Breast epithelium (tissue), 4 donors: ENCODE measurements at regions of chr13 and their contacts with region 1.

Region 1: DNA sequence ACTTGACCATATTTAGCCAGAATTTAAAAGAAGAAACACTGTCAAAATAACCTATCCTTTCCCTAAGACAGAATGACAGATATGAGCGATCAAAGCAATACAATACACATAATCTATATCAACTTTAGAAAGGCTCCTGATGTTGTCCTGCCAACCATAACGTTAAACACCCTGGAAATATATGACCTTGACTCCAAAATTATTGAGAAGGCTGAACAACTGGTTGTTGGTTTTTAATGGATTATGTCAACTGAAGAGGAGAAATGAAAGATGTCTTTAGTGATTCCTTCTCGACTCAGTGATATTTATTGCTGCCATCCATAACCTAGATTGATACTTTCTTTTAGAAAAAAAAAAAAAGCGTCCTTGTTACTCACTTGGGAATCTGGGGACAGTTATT is 957.2 kb downstream of the SLITRK1 start:
- DNase-seq: no peak
- H3K4me3 ChIP-seq: no peak overlapping the region
- H3K27ac ChIP-seq: no peak overlapping the region
- H3K4me1 ChIP-seq: no peaks in the 10 kb centered on the region
- H3K27me3 ChIP-seq: no peaks in the 10 kb centered on the region
- CTCF ChIP-seq: no peak
- POLR2A ChIP-seq: no peak

Region 2: DNA sequence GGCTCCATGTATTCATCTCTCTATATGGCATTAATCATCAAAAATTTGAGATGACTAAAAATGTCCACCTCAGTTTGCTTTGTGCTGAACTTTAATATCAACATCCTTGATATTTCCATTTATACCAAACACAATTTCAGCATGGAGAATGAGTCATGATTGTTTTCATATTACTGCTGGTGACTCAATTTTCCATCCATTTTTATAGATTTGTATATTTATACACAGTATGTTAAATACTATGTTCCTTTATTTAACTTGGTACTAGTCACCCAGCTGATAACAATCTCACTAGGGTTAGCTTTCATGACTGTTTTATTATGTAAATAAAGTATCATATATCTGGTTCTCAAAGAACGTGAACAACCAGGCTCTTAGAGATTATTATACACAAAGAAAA is 297.9 kb before region 1 on chr13:
- intact Hi-C with region 1: no loop called
- DNase-seq: no peak
- H3K4me3 ChIP-seq: no peak overlapping the region
- H3K27ac ChIP-seq: no peak overlapping the region
- H3K4me1 ChIP-seq: no peaks in the 10 kb centered on the region
- H3K27me3 ChIP-seq: no peaks in the 10 kb centered on the region
- CTCF ChIP-seq: no peak
- POLR2A ChIP-seq: no peak

Region 3: GRCh38 chr13:82976499-82976898 is 51.4 kb after region 1 on chr13:
- intact Hi-C with region 1: loop called (anchors 2 kb)
- DNase-seq: no peak
- H3K4me3 ChIP-seq: no peak overlapping the region
- H3K27ac ChIP-seq: no peak overlapping the region
- H3K4me1 ChIP-seq: no peaks in the 10 kb centered on the region
- H3K27me3 ChIP-seq: no peaks in the 10 kb centered on the region
- CTCF ChIP-seq: no peak
- POLR2A ChIP-seq: no peak